Naive thymus-derived CD4-positive, alpha-beta T cell (primary cell): ENCODE measurements at regions of chr19 and their contacts with region 1.

Region 1: DNA sequence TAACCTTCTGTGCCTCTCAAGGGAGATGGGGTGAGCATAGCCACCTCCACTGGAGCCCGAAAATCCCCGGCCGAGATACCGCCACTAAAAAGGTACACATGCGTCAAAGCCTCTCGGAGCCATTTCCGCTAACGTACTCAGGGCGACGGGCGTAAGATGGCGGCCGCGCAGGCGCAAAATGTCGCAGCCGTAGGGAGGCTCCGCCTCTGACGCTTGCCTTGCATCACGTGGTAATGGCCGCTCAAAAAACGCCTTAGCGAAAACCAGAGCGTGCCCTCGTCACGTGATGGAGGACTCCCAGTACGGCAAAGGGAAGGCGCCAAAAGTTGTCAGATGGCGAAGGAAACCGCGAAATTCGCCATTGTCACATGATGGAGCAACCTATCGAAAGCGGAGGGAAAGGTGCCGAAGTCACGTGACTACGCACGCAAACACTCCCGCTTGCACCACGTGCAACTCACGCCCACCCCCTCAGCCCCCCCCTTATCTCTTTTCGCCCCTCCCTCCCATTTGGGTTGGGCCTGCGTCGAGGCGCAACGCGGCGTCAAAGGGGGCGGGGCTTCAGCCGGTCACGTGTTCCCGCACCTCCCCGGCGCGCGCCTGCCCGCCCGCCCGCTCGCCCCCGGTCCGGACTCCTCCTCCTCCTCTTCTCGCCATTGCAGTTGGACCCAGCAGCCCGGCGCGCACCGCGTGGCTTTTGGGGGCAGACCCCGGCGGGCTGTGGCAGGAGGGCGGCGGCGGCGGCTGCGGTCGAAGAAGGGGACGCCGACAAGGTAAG is at the start of gene ILF3:
- DNase-seq: peak; percentile 97 to 100 (median 100)
- ATAC-seq: peak; percentile 89
- H3K4me3 ChIP-seq: peak within 1 kb of the TSS; percentile 87
- H3K4me3 Mint-ChIP-seq: peak within 1 kb of the TSS; percentile 93 to 98 (median 95)
- H3K27ac ChIP-seq: peak within 1 kb of the TSS; percentile 100
- H3K27ac Mint-ChIP-seq: peak within 1 kb of the TSS; percentile 94 to 99 (median 98)
- H3K4me1 ChIP-seq: peaks cover 32 to 38% of the 10 kb centered on the region in 2 donors
- H3K4me1 Mint-ChIP-seq: peaks cover 17 to 61% (median 42%) of the 10 kb centered on the region in 7 donors
- H3K27me3 ChIP-seq: no peaks in the 10 kb centered on the region
- H3K27me3 Mint-ChIP-seq: peaks cover 0 to 3% (median 0%) of the 10 kb centered on the region in 5 donors
- total RNA-seq, gene ILF3: 346 to 515 (median 368) TPM

Region 2: GRCh38 chr19:10332955-10333757 is 320.7 kb before region 1 on chr19 and contains the start of gene RAVER1:
- CTCF ChIA-PET with region 1: no interaction called
- POLR2A ChIA-PET with region 1: no interaction called
- intact Hi-C with region 1: loop called in 1 of 2 experiments (anchors 1 kb)
- DNase-seq: peak; percentile 86 to 98 (median 97)
- ATAC-seq: peak; percentile 98
- H3K4me3 ChIP-seq: peak within 1 kb of the TSS; percentile 89
- H3K4me3 Mint-ChIP-seq: peak within 1 kb of the TSS; percentile 89 to 98 (median 93)
- H3K27ac ChIP-seq: peak within 1 kb of the TSS; percentile 91
- H3K27ac Mint-ChIP-seq: peak within 1 kb of the TSS; percentile 85 to 97 (median 95)
- H3K4me1 ChIP-seq: peaks cover 17 to 31% of the 10 kb centered on the region in 2 donors
- H3K4me1 Mint-ChIP-seq: peaks cover 6 to 48% (median 33%) of the 10 kb centered on the region in 7 donors
- H3K27me3 ChIP-seq: no peaks in the 10 kb centered on the region
- H3K27me3 Mint-ChIP-seq: no peaks in the 10 kb centered on the region
- total RNA-seq, gene RAVER1: 43.2 to 81.1 (median 50.2) TPM

Region 3: DNA sequence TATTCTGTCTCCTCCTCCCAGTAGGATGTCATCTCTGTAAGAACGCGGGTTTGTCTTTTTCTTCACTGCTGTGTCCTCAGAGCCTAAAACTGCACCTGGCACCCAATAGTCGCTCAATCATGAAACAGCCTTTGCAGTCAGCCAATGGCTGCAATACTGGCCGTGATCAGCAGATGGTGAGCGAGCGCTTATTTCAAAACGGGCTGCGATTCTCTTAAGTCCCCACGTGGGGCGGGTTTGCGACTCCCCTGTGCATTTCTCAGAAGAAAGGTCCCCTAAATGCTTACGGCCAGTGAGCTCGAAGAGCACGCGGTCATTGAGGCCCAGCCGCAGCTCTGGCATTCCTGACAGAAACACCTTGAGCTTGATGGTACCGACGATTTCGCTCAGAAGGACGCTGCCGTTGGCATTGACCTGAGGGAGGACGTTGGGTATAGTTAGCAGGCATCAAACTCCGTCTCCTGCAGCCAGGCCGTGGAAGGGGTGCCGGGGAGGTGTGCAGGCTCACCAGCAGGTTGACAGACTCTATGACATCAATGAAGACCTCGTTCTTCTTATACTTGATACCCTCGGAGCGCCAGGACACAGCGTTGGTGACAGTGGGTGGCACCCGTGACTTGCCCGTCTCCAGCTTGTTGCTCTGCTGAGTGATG is 72.8 kb before region 1 on chr19:
- CTCF ChIA-PET with region 1: interaction called, 287 read pairs
- POLR2A ChIA-PET with region 1: interaction called, 10 read pairs
- intact Hi-C with region 1: loop called in 1 of 2 experiments (anchors 2 kb)
- DNase-seq: peak; percentile 76 to 88 (median 85)
- ATAC-seq: peak; percentile 100
- H3K4me3 ChIP-seq: no peak overlapping the region
- H3K4me3 Mint-ChIP-seq: peak overlapping the region in 4 of 10 donors; percentile 3 to 33 (median 24)
- H3K27ac ChIP-seq: no peak overlapping the region
- H3K27ac Mint-ChIP-seq: peak overlapping the region in 2 of 9 donors; percentile 2 to 72
- H3K4me1 ChIP-seq: peaks cover 4 to 5% of the 10 kb centered on the region in 2 donors
- H3K4me1 Mint-ChIP-seq: peaks cover 6 to 20% (median 7%) of the 10 kb centered on the region in 7 donors
- H3K27me3 ChIP-seq: no peaks in the 10 kb centered on the region
- H3K27me3 Mint-ChIP-seq: peaks cover 0 to 7% (median 0%) of the 10 kb centered on the region in 5 donors

Region 4: GRCh38 chr19:10701955-10702525 is 48.1 kb after region 1 on chr19:
- CTCF ChIA-PET with region 1: interaction called, 4 read pairs
- POLR2A ChIA-PET with region 1: interaction called, 6 read pairs
- intact Hi-C with region 1: loop called (anchors 1 kb)
- DNase-seq: peak in 2 of 9 donors; percentile 13 to 31
- ATAC-seq: peak; percentile 14
- H3K4me3 ChIP-seq: peak overlapping the region; percentile 94
- H3K4me3 Mint-ChIP-seq: peak overlapping the region; percentile 90 to 98 (median 95)
- H3K27ac ChIP-seq: peak overlapping the region; percentile 77
- H3K27ac Mint-ChIP-seq: peak overlapping the region in 8 of 9 donors; percentile 63 to 93 (median 78)
- H3K4me1 ChIP-seq: peaks cover 0 to 3% of the 10 kb centered on the region in 2 donors
- H3K4me1 Mint-ChIP-seq: peaks cover 6 to 18% (median 12%) of the 10 kb centered on the region in 7 donors
- H3K27me3 ChIP-seq: no peaks in the 10 kb centered on the region
- H3K27me3 Mint-ChIP-seq: peaks cover 0 to 4% (median 0%) of the 10 kb centered on the region in 5 donors

Region 5: GRCh38 chr19:10747271-10747670 is 93.4 kb after region 1 on chr19:
- CTCF ChIA-PET with region 1: no interaction called
- POLR2A ChIA-PET with region 1: no interaction called
- intact Hi-C with region 1: no loop called
- DNase-seq: no peak
- ATAC-seq: no peak
- H3K4me3 ChIP-seq: no peak overlapping the region
- H3K4me3 Mint-ChIP-seq: peak overlapping the region in 8 of 10 donors; percentile 17 to 72 (median 49)
- H3K27ac ChIP-seq: peak overlapping the region; percentile 44
- H3K27ac Mint-ChIP-seq: peak overlapping the region; percentile 15 to 89 (median 85)
- H3K4me1 ChIP-seq: peaks cover 14 to 52% of the 10 kb centered on the region in 2 donors
- H3K4me1 Mint-ChIP-seq: peaks cover 43 to 78% (median 60%) of the 10 kb centered on the region in 7 donors
- H3K27me3 ChIP-seq: no peaks in the 10 kb centered on the region
- H3K27me3 Mint-ChIP-seq: no peaks in the 10 kb centered on the region

Region 6: GRCh38 chr19:10870955-10871603 is 217.2 kb after region 1 on chr19 and contains the start of gene CARM1:
- CTCF ChIA-PET with region 1: no interaction called
- POLR2A ChIA-PET with region 1: no interaction called
- intact Hi-C with region 1: loop called (anchors 1 kb)
- DNase-seq: peak; percentile 99 to 100 (median 99)
- ATAC-seq: peak; percentile 92
- H3K4me3 ChIP-seq: peak within 1 kb of the TSS; percentile 67
- H3K4me3 Mint-ChIP-seq: peak within 1 kb of the TSS; percentile 79 to 91 (median 86)
- H3K27ac ChIP-seq: peak within 1 kb of the TSS; percentile 74
- H3K27ac Mint-ChIP-seq: peak within 1 kb of the TSS; percentile 74 to 96 (median 88)
- H3K4me1 ChIP-seq: peaks cover 10 to 14% of the 10 kb centered on the region in 2 donors
- H3K4me1 Mint-ChIP-seq: peaks cover 5 to 33% (median 25%) of the 10 kb centered on the region in 7 donors
- H3K27me3 ChIP-seq: no peaks in the 10 kb centered on the region
- H3K27me3 Mint-ChIP-seq: no peaks in the 10 kb centered on the region
- total RNA-seq, gene CARM1: 21.3 to 43.1 (median 27.2) TPM